ENCODE measurements at regions of chr6 and their contacts with region 1.

Region 1: DNA sequence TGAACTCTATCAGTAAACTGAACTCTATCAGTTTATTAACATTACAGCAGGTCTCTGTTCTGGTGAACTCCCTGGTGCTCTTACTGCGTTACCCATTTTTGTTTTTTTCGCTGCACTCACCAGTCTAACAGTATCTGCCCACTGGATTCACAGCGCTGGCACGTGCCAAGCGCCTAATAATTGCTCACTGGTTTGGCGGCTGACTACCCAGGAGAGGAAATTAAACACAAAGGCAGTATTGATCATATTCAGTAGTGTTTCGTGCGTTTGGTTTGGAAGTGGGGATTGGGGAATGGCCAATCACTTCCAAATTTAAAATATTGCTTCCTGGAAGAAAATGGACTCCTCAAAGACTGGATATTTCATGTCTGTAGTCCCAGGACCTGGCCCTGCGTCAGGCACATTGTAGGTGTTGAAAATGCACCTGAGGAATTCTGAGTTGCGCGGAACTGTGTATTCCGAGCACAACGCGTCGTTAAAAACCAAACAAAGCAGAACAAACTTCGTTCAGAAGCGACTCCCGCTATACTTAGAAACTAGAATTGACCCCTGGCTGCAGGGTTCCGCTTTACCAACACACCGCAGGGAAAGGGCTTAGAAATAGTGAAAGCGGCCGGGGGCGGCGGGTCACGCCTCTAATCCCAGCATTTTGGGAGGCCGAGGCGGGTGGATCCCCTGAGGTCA is 1.1 kb upstream of the RPS12 start:
- DNase-seq: peak in 1 of 2 experiments; percentile 48
- H3K4me3 ChIP-seq: peak overlapping the region; percentile 84 to 99 (median 96)
- H3K27ac ChIP-seq: peak overlapping the region; percentile 91
- H3K4me1 ChIP-seq: peaks cover 0 to 8% (median 4%) of the 10 kb centered on the region in 4 experiments; a peak in 6 of 7 replicates
- H3K27me3 ChIP-seq: no peaks in the 10 kb centered on the region
- CTCF ChIP-seq: no peak
- EP300 ChIP-seq: no peak
- POLR2A ChIP-seq: peak in 1 of 2 experiments; percentile 19; a peak in 2 of 3 replicates
- RAD21 ChIP-seq: no peak

Region 2: GRCh38 chr6:132512638-132513632 is 300.4 kb before region 1 on chr6 and contains the start of gene STX7:
- CTCF ChIA-PET with region 1: interaction called, 3 read pairs
- POLR2A ChIA-PET with region 1: interaction called, 10 read pairs
- DNase-seq: peak; percentile 61 to 89
- H3K4me3 ChIP-seq: peak within 1 kb of the TSS; percentile 54 to 83 (median 76)
- H3K27ac ChIP-seq: no peak within 1 kb of the TSS
- H3K4me1 ChIP-seq: peaks cover 0 to 4% (median under 1%) of the 10 kb centered on the region in 4 experiments; a peak in 3 of 7 replicates
- H3K27me3 ChIP-seq: no peaks in the 10 kb centered on the region
- CTCF ChIP-seq: no peak
- EP300 ChIP-seq: no peak
- POLR2A ChIP-seq: peak in 1 of 2 experiments; percentile 45; a peak in 1 of 3 replicates
- RAD21 ChIP-seq: no peak
- total RNA-seq, gene STX7: 27.9 and 32.6 TPM in 2 replicates

Region 3: GRCh38 chr6:132790450-132790849 is 22.9 kb before region 1 on chr6:
- CTCF ChIA-PET with region 1: interaction called, 5 read pairs
- POLR2A ChIA-PET with region 1: interaction called, 103 read pairs
- DNase-seq: no peak
- H3K4me3 ChIP-seq: no peak overlapping the region
- H3K27ac ChIP-seq: no peak overlapping the region
- H3K4me1 ChIP-seq: no peaks in the 10 kb centered on the region
- H3K27me3 ChIP-seq: no peaks in the 10 kb centered on the region
- CTCF ChIP-seq: no peak
- EP300 ChIP-seq: no peak
- POLR2A ChIP-seq: no peak
- RAD21 ChIP-seq: no peak

Region 4: DNA sequence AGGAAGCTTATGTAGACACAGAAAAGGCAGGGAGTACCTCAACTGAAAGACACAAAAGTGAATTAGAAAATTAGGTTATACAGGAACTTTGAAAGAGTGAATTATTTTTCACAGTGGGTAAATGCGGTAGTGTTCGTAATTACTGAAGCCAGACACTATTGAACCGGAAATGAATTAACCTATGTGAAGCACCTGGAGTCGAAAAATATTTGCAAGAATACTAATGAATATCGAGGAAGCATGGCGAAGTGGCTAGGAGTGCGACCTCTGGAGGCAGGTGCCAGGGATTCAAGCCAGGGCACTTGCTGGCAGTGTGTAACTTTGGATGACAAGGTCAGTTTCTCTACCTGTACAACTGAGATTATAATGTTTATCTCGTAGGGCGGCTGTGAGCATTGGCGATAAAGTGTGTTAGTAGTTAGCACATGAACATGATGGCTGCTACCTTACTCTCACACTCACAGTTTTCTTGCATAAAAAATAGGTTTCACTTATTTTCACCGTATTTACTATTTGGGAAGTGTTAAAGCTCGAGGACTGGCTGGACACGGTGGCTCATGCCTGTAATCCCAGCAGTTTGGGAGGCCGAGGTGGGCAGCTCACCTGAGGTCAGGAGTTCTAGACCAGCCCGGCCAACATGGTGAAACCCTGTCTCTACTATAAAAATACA is 14.3 kb before region 1 on chr6:
- CTCF ChIA-PET with region 1: interaction called, 51 read pairs
- POLR2A ChIA-PET with region 1: interaction called, 103 read pairs
- DNase-seq: peak in 1 of 2 experiments; percentile 76
- H3K4me3 ChIP-seq: peak overlapping the region; percentile 57 to 94 (median 74)
- H3K27ac ChIP-seq: no peak overlapping the region
- H3K4me1 ChIP-seq: peaks cover 0 to 3% (median 0%) of the 10 kb centered on the region in 4 experiments; a peak in 1 of 7 replicates
- H3K27me3 ChIP-seq: no peaks in the 10 kb centered on the region
- CTCF ChIP-seq: peak; percentile 55 to 93 (median 90)
- EP300 ChIP-seq: no peak
- POLR2A ChIP-seq: no peak
- RAD21 ChIP-seq: peak in 1 of 2 experiments; percentile 20; a peak in 2 of 4 replicates

Region 5: DNA sequence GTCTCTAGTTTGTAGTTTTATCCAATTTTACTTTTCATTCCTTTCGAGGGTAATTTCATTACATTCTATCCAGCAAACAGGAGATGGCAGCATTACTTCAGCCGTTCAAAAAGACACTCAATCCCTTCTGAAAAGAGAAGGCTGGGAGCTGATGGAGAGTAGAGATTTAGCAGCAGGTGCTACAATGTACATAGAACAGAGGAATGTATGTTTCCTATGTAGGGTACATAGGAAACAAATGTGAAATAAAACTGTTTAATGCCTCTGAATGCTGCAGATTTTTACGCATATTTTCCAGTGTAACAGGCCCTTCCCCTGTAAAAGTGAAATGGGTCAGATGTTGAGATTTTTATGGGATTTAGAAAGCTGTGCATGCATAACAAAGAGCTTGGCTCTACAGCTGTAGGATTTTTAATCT is 17.0 kb after region 1 on chr6:
- CTCF ChIA-PET with region 1: interaction called, 3 read pairs
- POLR2A ChIA-PET with region 1: interaction called, 122 read pairs
- DNase-seq: no peak
- H3K4me3 ChIP-seq: no peak overlapping the region
- H3K27ac ChIP-seq: no peak overlapping the region
- H3K4me1 ChIP-seq: no peaks in the 10 kb centered on the region
- H3K27me3 ChIP-seq: no peaks in the 10 kb centered on the region
- CTCF ChIP-seq: peak in 2 of 3 experiments; percentile 55 to 61; a peak in 3 of 4 replicates
- EP300 ChIP-seq: no peak
- POLR2A ChIP-seq: no peak
- RAD21 ChIP-seq: peak; percentile 92 to 93

Region 6: DNA sequence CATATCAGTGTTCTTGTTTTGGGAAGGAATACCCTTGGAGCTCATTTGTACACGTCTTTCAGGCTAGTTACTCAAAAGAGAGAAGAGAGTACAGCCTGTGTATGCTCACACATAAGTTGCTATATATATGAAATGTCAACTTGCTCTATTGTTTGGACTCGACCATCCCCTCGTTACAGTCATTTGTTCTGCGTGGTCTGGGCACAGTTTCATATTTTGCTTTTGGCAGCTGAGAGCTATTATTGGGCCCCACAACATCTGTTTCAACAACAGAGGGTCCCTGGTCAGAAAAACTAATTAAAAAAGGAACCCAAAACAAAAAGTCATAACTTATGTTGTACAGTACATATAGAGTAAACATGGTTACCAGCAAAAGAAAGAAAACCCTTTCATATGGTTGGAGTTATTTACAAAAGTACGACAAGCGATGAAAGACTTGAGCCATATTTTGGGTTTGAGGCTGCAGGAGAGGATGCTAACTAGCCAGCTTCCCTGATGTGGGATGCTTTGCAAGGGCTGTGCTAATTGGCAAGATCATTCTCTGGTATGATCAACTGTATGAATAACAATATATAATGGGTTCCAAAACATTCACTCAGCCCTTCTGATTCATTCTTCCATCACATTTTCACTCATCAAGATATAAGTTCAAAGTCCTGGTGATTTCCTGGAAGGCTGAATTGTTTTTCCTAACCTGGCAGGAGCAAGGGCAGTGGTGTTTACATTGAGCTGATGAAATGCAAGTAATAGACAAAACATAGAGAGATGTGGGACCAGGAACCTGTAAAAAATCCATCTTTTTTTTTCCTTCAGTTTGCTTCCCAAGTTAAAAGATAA is 138.9 kb after region 1 on chr6:
- CTCF ChIA-PET with region 1: no interaction called
- POLR2A ChIA-PET with region 1: interaction called, 14 read pairs
- DNase-seq: no peak
- H3K4me3 ChIP-seq: no peak overlapping the region
- H3K27ac ChIP-seq: no peak overlapping the region
- H3K4me1 ChIP-seq: no peaks in the 10 kb centered on the region
- H3K27me3 ChIP-seq: no peaks in the 10 kb centered on the region
- CTCF ChIP-seq: no peak
- EP300 ChIP-seq: no peak
- POLR2A ChIP-seq: no peak
- RAD21 ChIP-seq: no peak

Measured in H1 (cell line).